ENCODE measurements at regions of chr11 and their contacts with region 1.

Region 1: GRCh38 chr11:66976048-66976467 is 954 bp downstream of the C11orf86 start:
- DNase-seq: no peak
- H3K4me3 Mint-ChIP-seq: no peak overlapping the region
- H3K27ac Mint-ChIP-seq: no peak overlapping the region
- H3K4me1 Mint-ChIP-seq: peaks cover 4% of the 10 kb centered on the region
- H3K27me3 Mint-ChIP-seq: peaks cover 1% of the 10 kb centered on the region

Region 2: GRCh38 chr11:66815646-66816045 is 160.4 kb before region 1 on chr11:
- intact Hi-C with region 1: no loop called
- DNase-seq: no peak
- H3K4me3 Mint-ChIP-seq: no peak overlapping the region
- H3K27ac Mint-ChIP-seq: no peak overlapping the region
- H3K4me1 Mint-ChIP-seq: peaks cover 7% of the 10 kb centered on the region
- H3K27me3 Mint-ChIP-seq: no peaks in the 10 kb centered on the region

Region 3: DNA sequence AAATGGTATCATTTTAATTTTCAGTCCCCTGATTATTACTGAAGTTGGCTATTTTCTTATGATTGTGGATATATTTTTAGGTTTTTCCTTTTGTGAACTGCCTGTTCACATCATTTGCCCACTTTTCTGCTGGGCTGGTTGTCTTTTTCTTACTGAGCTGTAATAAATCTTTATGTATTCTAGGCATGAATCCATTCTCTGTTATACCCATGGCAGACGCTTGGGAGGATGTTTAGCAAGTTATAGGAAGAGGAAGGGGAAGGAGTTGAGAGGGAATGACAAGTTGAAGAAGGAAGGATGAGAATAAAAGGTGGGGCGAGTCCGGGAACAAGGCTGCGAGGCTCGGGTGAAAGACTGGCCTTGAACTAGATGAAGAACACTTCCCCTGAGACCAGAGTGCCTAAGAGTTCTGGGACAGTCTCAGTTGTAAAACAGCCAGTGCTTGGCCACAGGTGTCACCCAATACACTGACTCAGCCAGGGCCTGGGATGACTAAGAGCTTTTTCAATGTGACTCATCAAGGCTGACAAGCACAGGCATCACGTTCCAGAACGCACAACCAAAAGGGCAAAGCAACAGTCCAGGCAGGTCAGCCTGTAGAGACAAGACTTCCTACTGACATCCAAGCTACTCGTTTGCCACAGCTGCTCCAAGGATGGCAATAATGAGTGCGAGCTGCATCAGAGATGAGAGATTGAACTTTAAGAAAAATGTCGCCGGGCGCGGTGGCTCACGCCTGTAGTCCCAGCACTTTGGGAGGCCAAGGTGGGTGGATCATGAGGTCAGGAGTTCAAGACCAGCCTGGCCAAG is 84.0 kb before region 1 on chr11:
- intact Hi-C with region 1: loop called (anchors 10 kb)
- DNase-seq: peak; percentile 28
- H3K4me3 Mint-ChIP-seq: no peak overlapping the region
- H3K27ac Mint-ChIP-seq: peak overlapping the region; percentile 60
- H3K4me1 Mint-ChIP-seq: peaks cover 12% of the 10 kb centered on the region
- H3K27me3 Mint-ChIP-seq: peaks cover 9% of the 10 kb centered on the region

Region 4: GRCh38 chr11:66996609-66997405 is 20.7 kb after region 1 on chr11:
- intact Hi-C with region 1: no loop called
- DNase-seq: no peak
- H3K4me3 Mint-ChIP-seq: no peak overlapping the region
- H3K27ac Mint-ChIP-seq: no peak overlapping the region
- H3K4me1 Mint-ChIP-seq: no peaks in the 10 kb centered on the region
- H3K27me3 Mint-ChIP-seq: peaks cover 8% of the 10 kb centered on the region

Region 5: DNA sequence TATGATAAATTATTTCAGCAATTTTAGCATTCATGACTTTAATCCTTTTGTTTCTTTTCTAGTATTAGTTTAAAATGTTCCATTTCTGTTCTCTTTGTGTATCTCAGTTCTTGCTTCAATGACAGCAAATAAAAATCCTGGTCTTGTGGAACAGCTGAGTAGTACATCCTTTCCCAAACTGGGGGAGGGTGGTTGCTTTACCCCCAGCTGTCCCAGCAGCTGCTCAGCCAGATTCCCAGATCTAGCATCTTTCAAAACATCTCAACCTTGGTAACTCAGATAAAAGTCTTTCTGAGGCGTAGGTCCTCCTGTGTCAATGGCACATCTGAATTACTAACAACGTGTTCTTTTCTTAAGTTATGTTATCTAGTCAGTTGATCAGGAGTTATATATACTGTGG is 218.0 kb after region 1 on chr11:
- intact Hi-C with region 1: no loop called
- DNase-seq: no peak
- H3K4me3 Mint-ChIP-seq: no peak overlapping the region
- H3K27ac Mint-ChIP-seq: no peak overlapping the region
- H3K4me1 Mint-ChIP-seq: peaks cover 11% of the 10 kb centered on the region
- H3K27me3 Mint-ChIP-seq: no peaks in the 10 kb centered on the region